Activated CD8-positive, alpha-beta T cell treated with anti-CD3 and anti-CD28 coated beads for 36 hours (primary cell): ENCODE measurements at regions of chr1 and their contacts with region 1.

Region 1: GRCh38 chr1:66137235-66137634 is 344.5 kb downstream of the PDE4B start:
- DNase-seq: no peak
- ATAC-seq: peak; percentile 86
- H3K4me3 Mint-ChIP-seq: no peak overlapping the region
- H3K27ac Mint-ChIP-seq: no peak overlapping the region
- H3K4me1 Mint-ChIP-seq: peaks cover 2% of the 10 kb centered on the region
- H3K27me3 Mint-ChIP-seq: peaks cover 1% of the 10 kb centered on the region
- CTCF ChIP-seq: no peak

Region 2: GRCh38 chr1:66182551-66183178 is 45.4 kb after region 1 on chr1:
- CTCF ChIA-PET with region 1: no interaction called
- POLR2A ChIA-PET with region 1: no interaction called
- intact Hi-C with region 1: loop called (anchors 5 kb)
- DNase-seq: peak; percentile 70
- ATAC-seq: peak; percentile 98
- H3K4me3 Mint-ChIP-seq: no peak overlapping the region
- H3K27ac Mint-ChIP-seq: peak overlapping the region; percentile 39
- H3K4me1 Mint-ChIP-seq: peaks cover 21% of the 10 kb centered on the region
- H3K27me3 Mint-ChIP-seq: no peaks in the 10 kb centered on the region
- CTCF ChIP-seq: no peak